Heart right ventricle (tissue), 16 donors: ENCODE measurements at regions of chr17 and their contacts with region 1.

Region 1: GRCh38 chr17:70622368-70623260 is 453.3 kb downstream of the KCNJ2 start:
- DNase-seq: peak; percentile 37 to 50
- ATAC-seq: peak in 7 of 8 donors; percentile 55 to 84 (median 71)
- H3K4me3 ChIP-seq: peak overlapping the region in 2 of 10 donors; percentile 2 to 7
- H3K27ac ChIP-seq: no peak overlapping the region
- H3K4me1 ChIP-seq: peaks cover 0 to 14% (median 4%) of the 10 kb centered on the region in 9 donors
- H3K27me3 ChIP-seq: no peaks in the 10 kb centered on the region
- CTCF ChIP-seq: peak; percentile 7 to 66 (median 57)

Region 2: DNA sequence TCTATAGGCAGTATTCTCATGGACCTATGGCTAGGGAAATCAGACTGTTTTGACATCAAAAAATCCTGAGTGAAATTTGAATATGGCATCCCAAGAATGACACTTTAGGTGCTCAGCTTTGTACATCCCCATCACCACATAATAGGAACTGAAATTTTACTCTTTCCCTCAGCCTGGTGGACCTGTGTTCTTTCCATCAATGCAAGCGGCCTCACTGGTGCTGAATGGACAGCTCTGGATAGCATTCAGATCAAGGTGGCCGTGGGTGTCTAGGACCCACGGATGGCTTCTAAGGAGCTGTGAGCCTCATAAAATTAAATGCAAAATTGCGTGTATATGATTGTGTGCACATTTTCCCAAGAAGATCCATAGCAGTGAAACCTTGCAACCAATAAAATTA is 1055.5 kb before region 1 on chr17:
- intact Hi-C with region 1: loop called in 8 of 10 experiments (anchors 2 to 10 kb)
- DNase-seq: no peak
- ATAC-seq: no peak
- H3K4me3 ChIP-seq: no peak overlapping the region
- H3K27ac ChIP-seq: no peak overlapping the region
- H3K4me1 ChIP-seq: peaks cover 0 to 9% (median 0%) of the 10 kb centered on the region in 9 donors
- H3K27me3 ChIP-seq: no peaks in the 10 kb centered on the region
- CTCF ChIP-seq: no peak

Region 3: GRCh38 chr17:69607162-69607834 is 1015.3 kb before region 1 on chr17:
- intact Hi-C with region 1: loop called in 4 of 10 experiments (anchors 2 to 10 kb)
- DNase-seq: peak; percentile 65 to 78
- ATAC-seq: peak; percentile 78 to 92 (median 87)
- H3K4me3 ChIP-seq: no peak overlapping the region
- H3K27ac ChIP-seq: peak overlapping the region; percentile 5 to 82 (median 50)
- H3K4me1 ChIP-seq: peaks cover 15 to 40% (median 35%) of the 10 kb centered on the region in 9 donors
- H3K27me3 ChIP-seq: no peaks in the 10 kb centered on the region
- CTCF ChIP-seq: peak; percentile 74 to 92 (median 88)

Region 4: GRCh38 chr17:70168977-70169708 is 453.5 kb before region 1 on chr17 and contains the start of gene KCNJ2:
- intact Hi-C with region 1: loop called in 5 of 10 experiments (anchors 5 to 10 kb)
- DNase-seq: peak; percentile 88 to 91
- ATAC-seq: peak; percentile 87 to 97 (median 94)
- H3K4me3 ChIP-seq: peak within 1 kb of the TSS; percentile 62 to 97 (median 78)
- H3K27ac ChIP-seq: peak within 1 kb of the TSS; percentile 89 to 98 (median 95)
- H3K4me1 ChIP-seq: peaks cover 0 to 29% (median 14%) of the 10 kb centered on the region in 9 donors
- H3K27me3 ChIP-seq: no peaks in the 10 kb centered on the region
- CTCF ChIP-seq: no peak
- total RNA-seq, gene KCNJ2: 16.7 to 76.0 (median 46.8) TPM

Region 5: DNA sequence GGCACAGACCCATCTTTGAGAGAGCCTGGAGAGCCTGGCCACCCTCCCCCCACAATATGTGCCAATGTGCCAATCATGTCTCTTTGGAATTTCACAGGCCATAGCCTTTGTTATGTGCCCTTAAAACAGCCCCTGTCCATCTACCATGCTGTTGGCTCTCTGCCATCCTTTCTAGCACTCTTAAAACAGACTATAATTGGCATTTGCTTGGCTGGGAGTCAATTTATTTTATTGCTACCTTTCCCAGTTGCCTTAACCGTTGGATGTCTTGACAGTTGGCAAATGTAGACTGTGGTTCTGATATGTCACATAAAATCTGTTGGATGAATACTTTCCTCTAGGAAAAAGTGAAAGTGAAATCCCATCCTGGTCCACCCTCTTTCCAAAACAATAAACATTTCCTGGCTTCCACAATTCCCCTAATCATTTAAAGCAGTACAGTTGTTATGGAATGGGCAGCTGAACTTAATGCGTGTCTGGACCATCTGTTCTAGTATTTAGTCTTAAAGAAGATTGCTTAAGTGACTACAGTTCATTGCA is 59.3 kb before region 1 on chr17:
- intact Hi-C with region 1: loop called in 3 of 10 experiments (anchors 5 to 10 kb)
- DNase-seq: peak in 1 of 2 donors; percentile 33
- ATAC-seq: peak in 6 of 8 donors; percentile 63 to 97 (median 78)
- H3K4me3 ChIP-seq: no peak overlapping the region
- H3K27ac ChIP-seq: peak overlapping the region in 3 of 10 donors; percentile 15 to 46 (median 39)
- H3K4me1 ChIP-seq: peaks cover 0 to 13% (median 5%) of the 10 kb centered on the region in 9 donors
- H3K27me3 ChIP-seq: no peaks in the 10 kb centered on the region
- CTCF ChIP-seq: no peak